ENCODE measurements at regions of chr20 and their contacts with region 1.

Region 1: DNA sequence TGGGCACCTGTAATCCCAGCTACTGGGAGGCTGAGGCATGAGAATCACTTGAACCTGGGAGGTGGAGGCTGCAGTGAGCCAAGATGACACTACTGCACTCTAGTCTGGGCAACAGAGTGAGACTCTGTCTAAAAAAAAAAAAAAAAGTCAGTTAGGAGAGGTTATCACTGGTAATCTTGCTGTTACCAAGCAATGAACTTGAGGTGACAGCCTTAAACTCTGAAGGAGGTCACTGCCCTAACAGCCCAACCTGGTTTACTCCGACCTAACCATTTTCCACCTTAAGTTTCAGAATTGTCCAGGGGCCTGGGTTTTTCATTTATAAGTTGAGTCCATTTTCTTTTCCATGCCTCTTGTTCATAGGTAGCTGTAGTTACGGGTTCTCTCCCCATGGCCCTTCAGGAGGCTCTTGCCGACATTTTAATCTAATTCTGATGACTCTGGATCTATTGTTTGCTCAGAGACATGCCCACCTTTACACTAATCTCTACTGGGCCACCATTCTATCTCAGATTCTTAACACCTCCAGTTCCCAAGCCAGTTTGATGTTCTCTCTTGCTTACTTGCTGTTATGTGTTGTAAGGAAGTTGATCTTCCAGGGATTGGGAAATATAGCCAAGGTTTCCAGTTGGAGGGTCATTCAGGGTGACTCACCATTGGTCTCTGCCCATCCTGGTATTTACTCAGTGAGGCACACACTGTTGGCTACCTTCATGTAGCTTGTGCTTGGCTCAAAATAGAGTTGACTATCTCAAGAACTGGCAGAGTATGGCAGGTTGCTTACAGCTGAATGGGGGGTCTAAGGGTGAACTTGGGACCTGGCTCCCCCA is 29.1 kb downstream of the SHLD1 start:
- DNase-seq: peak; percentile 91
- ATAC-seq: peak; percentile 83
- H3K4me3 ChIP-seq: no peak overlapping the region
- H3K27ac ChIP-seq: peak overlapping the region; percentile 36
- H3K4me1 ChIP-seq: peaks cover 52% of the 10 kb centered on the region
- H3K27me3 ChIP-seq: no peaks in the 10 kb centered on the region
- CTCF ChIP-seq: no peak
- EP300 ChIP-seq: peak in 1 of 2 experiments; percentile 95; a peak in 2 of 4 replicates
- POLR2A ChIP-seq: no peak
- RAD21 ChIP-seq: no peak

Region 2: DNA sequence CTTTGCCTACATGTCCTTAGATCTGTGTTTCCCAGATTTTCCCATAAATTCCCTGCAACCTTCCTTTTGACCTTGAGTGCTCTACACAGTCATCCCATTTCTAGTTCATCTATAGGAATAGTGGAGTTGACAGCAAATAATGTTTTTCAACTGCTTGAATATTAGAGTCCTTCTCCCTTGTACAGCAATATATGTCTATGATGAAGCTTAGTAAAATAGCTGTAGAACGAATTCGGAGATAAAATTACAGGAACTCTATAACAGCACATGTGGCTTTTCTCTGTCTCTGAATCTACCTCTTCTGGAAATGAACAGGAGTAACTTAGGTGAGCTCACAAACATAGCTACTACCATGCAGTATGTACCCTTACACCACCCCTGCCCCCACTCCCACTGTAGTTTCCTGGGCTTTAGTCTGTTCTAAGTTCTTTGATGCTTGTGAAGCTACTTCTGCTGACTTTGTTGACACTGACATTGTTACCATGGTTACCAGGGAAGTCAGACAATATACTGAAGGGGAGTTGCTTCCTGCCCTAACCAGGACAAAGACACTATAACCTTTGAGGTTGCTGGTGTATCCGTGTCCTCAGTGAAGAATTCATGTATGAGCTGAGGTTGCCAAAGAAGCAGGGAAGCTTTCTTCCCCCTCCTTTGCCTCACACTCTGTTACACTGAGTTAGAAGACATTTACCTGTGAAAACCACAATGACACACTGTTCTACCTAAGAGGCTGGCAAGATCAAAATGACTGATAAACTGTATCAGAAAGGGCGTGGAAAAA is 64.8 kb before region 1 on chr20:
- CTCF ChIA-PET with region 1: no interaction called
- POLR2A ChIA-PET with region 1: no interaction called
- in situ Hi-C with region 1: no loop called
- intact Hi-C with region 1: loop called (anchors 10 kb)
- DNase-seq: peak; percentile 100
- ATAC-seq: peak; percentile 97
- H3K4me3 ChIP-seq: peak overlapping the region in 1 of 3 experiments; percentile 14; a peak in 1 of 6 replicates
- H3K27ac ChIP-seq: peak overlapping the region; percentile 73
- H3K4me1 ChIP-seq: peaks cover 40% of the 10 kb centered on the region
- H3K27me3 ChIP-seq: no peaks in the 10 kb centered on the region
- CTCF ChIP-seq: no peak
- EP300 ChIP-seq: peak in 1 of 2 experiments; percentile 78; a peak in 2 of 4 replicates
- POLR2A ChIP-seq: 0 out of 4 replicates have a peak, but pooled peaks of 1 of the 2 experiments have one; percentile 19
- RAD21 ChIP-seq: no peak

Region 3: GRCh38 chr20:5749952-5750779 is 29.1 kb before region 1 on chr20 and contains the start of gene SHLD1:
- CTCF ChIA-PET with region 1: no interaction called
- POLR2A ChIA-PET with region 1: interaction called, 22 read pairs
- in situ Hi-C with region 1: no loop called
- intact Hi-C with region 1: no loop called
- DNase-seq: peak; percentile 92
- ATAC-seq: peak; percentile 97
- H3K4me3 ChIP-seq: peak within 1 kb of the TSS; percentile 61 to 85 (median 77)
- H3K27ac ChIP-seq: peak within 1 kb of the TSS; percentile 76
- H3K4me1 ChIP-seq: peaks cover 47% of the 10 kb centered on the region
- H3K27me3 ChIP-seq: no peaks in the 10 kb centered on the region
- CTCF ChIP-seq: no peak
- EP300 ChIP-seq: no peak
- POLR2A ChIP-seq: peak; percentile 62 to 83
- RAD21 ChIP-seq: peak; percentile 56
- total RNA-seq, gene SHLD1: 8.9 and 11.3 TPM in 2 replicates

Region 4: GRCh38 chr20:5810800-5811422 is 31.6 kb after region 1 on chr20:
- CTCF ChIA-PET with region 1: no interaction called
- POLR2A ChIA-PET with region 1: no interaction called
- in situ Hi-C with region 1: no loop called
- intact Hi-C with region 1: no loop called
- DNase-seq: no peak
- ATAC-seq: no peak
- H3K4me3 ChIP-seq: no peak overlapping the region
- H3K27ac ChIP-seq: no peak overlapping the region
- H3K4me1 ChIP-seq: peaks cover 39% of the 10 kb centered on the region
- H3K27me3 ChIP-seq: no peaks in the 10 kb centered on the region
- CTCF ChIP-seq: no peak
- EP300 ChIP-seq: no peak
- POLR2A ChIP-seq: no peak
- RAD21 ChIP-seq: no peak

Measured in HepG2 (cell line).